ENCODE measurements at regions of chr20 and their contacts with region 1.

Region 1: DNA sequence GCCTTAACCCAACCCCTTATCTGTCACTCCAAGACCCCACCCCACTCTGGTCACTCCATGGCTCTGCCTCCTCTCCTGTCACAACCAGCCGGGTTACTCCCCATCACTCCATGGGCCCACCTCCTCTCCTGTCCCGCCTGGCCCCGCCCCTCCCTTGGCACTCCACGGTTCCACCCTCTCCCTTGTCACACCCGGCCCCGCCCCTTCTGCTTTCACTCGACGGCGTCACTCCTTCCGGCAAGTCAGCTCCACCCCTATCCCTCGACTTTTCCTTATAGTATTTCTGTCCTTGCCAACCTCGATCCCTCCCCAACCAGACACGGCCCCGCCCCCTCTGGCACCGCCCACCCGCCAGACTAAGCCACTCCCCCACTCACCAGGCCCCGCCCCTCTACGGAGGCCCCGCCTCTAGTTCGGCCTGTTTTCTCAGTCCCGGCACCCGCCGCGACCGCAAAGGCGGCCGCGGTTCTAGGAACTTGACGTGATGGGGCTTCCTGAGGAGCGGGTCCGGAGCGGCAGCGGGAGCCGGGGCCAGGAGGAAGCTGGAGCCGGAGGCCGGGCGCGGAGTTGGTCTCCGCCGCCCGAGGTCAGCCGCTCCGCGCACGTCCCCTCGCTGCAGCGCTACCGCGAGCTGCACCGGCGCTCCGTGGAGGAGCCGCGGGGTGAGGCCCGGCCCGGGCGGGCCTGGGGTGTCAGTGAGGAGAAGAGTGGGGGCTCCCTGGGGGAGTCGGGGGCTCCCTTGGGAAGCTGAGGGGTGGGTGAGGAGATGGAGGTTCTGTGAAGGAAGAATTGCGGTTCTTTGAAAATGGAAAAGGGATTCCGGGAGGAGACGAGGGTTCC is at the start of gene ACSS2:
- DNase-seq: peak; percentile 98
- ATAC-seq: peak; percentile 90
- H3K4me3 ChIP-seq: peak within 1 kb of the TSS; percentile 76 to 80
- H3K27ac ChIP-seq: peak within 1 kb of the TSS; percentile 57
- H3K4me1 ChIP-seq: peaks cover 23 to 50% of the 10 kb centered on the region in 2 experiments
- H3K27me3 ChIP-seq: no peaks in the 10 kb centered on the region
- CTCF ChIP-seq: no peak
- POLR2A ChIP-seq: peak; percentile 31
- RAD21 ChIP-seq: no peak
- total RNA-seq, gene ACSS2: 71.7 TPM

Region 2: DNA sequence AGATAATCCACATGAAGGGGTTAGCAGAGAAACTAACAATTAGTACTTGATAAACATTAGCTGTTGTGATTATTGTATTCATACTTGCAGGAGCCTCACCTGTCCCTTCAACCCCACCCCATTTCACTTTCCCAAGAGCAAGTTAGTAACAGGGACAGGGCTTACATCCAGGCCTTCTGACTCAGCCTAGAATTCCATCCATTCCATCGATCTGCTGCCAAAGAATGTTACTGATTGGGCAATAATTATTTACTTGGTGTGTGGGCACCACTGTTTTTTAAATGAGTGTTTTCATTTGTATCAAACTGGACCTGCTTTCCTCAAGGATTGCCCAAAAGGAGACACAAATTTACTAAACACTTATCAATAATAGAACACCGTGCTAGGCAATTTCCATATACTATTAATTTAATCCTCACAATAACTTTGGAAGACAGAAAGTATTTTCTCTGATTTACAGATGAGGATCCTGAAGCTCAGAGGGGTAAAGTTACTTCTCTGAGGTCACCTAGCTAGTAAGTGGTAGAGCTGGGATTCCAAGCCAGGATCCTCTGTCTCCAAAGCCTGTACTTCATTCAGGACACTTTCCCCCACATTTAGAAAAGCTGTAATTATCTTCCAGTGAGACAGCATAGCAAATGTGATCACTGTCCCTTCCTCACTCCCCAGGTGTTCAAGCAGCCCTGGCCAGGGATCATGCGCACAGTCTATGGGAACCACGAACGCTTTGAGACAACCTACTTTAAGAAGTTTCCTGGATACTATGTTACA is 46.5 kb after region 1 on chr20:
- CTCF ChIA-PET with region 1: no interaction called
- POLR2A ChIA-PET with region 1: no interaction called
- RAD21 ChIA-PET with region 1: no interaction called
- intact Hi-C with region 1: no loop called
- DNase-seq: no peak
- ATAC-seq: peak; percentile 47; the same call in 1 of the 2 replicates
- H3K4me3 ChIP-seq: no peak overlapping the region
- H3K27ac ChIP-seq: no peak overlapping the region
- H3K4me1 ChIP-seq: peaks cover 4 to 10% of the 10 kb centered on the region in 2 experiments
- H3K27me3 ChIP-seq: no peaks in the 10 kb centered on the region
- CTCF ChIP-seq: no peak
- POLR2A ChIP-seq: no peak
- RAD21 ChIP-seq: no peak

Region 3: DNA sequence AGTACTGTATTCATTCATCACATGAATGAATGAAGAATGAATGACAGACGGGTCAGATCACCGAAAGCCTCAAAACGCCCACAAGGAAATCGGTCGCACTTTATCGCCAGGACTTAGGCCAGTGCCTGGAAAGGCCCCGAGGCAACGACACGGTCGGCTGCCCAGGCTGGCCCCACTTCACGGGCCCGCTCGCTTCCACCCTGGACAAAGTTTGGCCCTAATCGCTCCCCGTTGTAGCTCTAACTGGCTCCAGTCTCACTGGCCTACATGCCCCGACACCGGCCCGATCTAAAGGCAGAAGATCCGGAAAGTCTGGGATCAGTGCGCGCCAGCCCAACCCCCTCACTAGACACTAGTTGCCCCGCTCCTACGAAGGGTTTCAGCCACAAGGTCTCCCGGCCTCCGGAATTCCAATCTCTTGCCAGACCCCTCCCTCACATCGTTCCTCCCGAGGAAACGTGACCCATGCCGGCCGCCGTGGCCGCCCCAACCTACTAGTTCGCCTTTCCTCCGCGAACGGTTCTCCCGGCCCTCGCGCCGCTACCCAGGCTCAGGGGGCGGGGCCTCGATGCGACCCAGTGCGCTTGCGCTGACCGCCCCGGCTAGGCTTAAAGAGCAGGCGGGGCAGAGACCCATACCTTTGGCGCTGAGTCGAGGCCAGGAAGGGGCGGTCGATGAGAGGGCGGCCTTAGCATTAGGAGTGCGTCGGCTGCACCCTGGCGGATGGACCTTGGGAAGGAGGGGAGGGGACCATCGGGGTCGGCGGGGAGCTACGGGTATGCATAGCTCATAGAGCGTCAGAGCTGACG is 79.1 kb after region 1 on chr20 and contains the starts of genes GSS and MYH7B:
- CTCF ChIA-PET with region 1: interaction called, 26 read pairs
- POLR2A ChIA-PET with region 1: interaction called, 7 read pairs
- RAD21 ChIA-PET with region 1: interaction called, 5 to 11 read pairs
- intact Hi-C with region 1: loop called (anchors 1 kb)
- DNase-seq: peak; percentile 91
- ATAC-seq: peak; percentile 94
- H3K4me3 ChIP-seq: peak within 1 kb of the TSS; percentile 88 to 91
- H3K27ac ChIP-seq: peak within 1 kb of the TSS; percentile 75
- H3K4me1 ChIP-seq: peaks cover 7 to 19% of the 10 kb centered on the region in 2 experiments
- H3K27me3 ChIP-seq: no peaks in the 10 kb centered on the region
- CTCF ChIP-seq: peak; percentile 37 to 78 (median 49); a peak in 5 of 6 replicates
- POLR2A ChIP-seq: peak; percentile 88
- RAD21 ChIP-seq: peak; percentile 89
- total RNA-seq, gene GSS: 83.6 TPM
- total RNA-seq, gene MYH7B: 0.74 TPM

Region 4: DNA sequence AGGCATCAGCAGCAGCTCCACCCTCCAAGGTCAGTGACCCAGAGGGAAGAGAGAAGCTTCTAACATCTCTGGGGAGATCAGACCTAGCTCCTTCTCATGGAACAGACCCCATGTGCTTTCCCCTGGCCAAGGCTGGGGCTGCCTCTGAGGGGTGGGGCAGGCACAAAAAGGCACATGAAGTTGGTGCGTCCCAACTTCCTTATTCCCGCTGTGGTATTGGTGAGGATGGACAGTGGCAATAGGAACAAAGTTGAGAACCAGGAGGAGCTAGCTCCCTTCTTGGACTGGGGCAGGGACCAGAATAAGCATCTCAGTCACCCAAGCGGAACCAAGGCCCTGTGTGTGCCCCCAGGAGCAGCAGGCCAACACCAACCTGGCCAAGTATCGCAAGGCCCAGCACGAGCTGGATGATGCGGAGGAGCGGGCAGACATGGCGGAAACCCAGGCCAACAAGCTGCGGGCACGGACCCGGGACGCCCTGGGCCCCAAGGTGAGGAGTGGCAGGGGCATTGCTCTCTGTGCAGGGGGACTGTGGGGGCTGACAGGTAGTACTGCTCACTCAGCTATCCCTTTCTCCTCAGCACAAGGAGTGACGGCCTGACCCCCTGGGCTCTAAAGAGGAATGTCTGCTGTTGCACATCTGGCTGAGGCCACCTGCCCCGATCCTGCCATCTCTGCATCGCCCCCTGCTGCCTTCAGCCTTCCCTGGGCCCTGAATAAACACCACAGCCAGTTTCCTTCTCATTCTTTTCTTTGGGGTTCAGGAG is 125.4 kb after region 1 on chr20:
- CTCF ChIA-PET with region 1: interaction called, 19 read pairs
- POLR2A ChIA-PET with region 1: interaction called, 3 read pairs
- RAD21 ChIA-PET with region 1: interaction called, 5 to 8 read pairs
- intact Hi-C with region 1: no loop called
- DNase-seq: no peak
- ATAC-seq: peak; percentile 58
- H3K4me3 ChIP-seq: no peak overlapping the region
- H3K27ac ChIP-seq: no peak overlapping the region
- H3K4me1 ChIP-seq: no peaks in the 10 kb centered on the region
- H3K27me3 ChIP-seq: no peaks in the 10 kb centered on the region
- CTCF ChIP-seq: peak in 2 of 3 experiments; percentile 45 to 48; a peak in 4 of 6 replicates
- POLR2A ChIP-seq: no peak
- RAD21 ChIP-seq: peak; percentile 39; the same call in 1 of the 2 replicates

Region 5: GRCh38 chr20:35085477-35086225 is 209.3 kb after region 1 on chr20:
- CTCF ChIA-PET with region 1: interaction called, 5 read pairs
- POLR2A ChIA-PET with region 1: no interaction called
- RAD21 ChIA-PET with region 1: interaction called in 1 of 2 experiments, 4 read pairs
- intact Hi-C with region 1: loop called (anchors 5 kb)
- DNase-seq: no peak
- ATAC-seq: no peak
- H3K4me3 ChIP-seq: no peak overlapping the region
- H3K27ac ChIP-seq: no peak overlapping the region
- H3K4me1 ChIP-seq: no peaks in the 10 kb centered on the region; a peak in 1 of 4 replicates
- H3K27me3 ChIP-seq: no peaks in the 10 kb centered on the region
- CTCF ChIP-seq: no peak
- POLR2A ChIP-seq: no peak
- RAD21 ChIP-seq: no peak

Region 6: DNA sequence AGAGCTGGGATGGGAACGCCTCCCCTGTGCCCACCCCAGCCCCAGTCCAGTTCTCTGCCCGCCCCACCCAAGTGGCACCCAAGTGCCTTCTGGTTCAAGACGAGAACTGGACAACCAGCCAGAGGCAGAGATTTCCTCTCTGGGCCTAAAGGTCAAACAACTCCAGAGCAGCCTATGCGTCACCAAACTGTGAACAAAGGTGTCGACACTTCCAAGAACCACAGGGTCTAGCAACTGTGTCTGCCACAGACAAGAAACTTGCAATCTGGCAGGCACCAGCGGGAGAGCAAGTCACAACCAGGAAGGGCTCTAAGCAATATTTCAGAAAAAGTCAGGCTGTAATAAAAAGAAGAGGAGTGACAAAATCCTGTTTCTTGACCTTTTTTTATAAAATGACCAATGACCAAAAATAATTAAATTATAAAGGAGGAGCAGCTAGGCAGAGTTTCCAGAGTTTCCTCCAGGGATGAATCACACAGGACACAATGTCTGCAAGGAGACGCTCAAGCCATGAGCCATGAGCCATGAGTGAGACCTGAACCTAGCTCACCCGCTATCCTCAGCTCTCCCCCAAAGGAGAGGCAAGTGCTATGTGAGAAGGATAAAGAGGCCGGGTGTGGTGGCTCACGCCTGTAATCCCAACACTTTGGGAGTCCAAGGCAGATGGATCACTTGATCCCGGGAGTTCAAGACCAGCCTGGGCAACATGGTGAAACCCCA is 259.6 kb after region 1 on chr20:
- CTCF ChIA-PET with region 1: no interaction called
- POLR2A ChIA-PET with region 1: no interaction called
- RAD21 ChIA-PET with region 1: no interaction called
- intact Hi-C with region 1: no loop called
- DNase-seq: no peak
- ATAC-seq: no peak
- H3K4me3 ChIP-seq: no peak overlapping the region
- H3K27ac ChIP-seq: no peak overlapping the region
- H3K4me1 ChIP-seq: no peaks in the 10 kb centered on the region
- H3K27me3 ChIP-seq: no peaks in the 10 kb centered on the region
- CTCF ChIP-seq: no peak
- POLR2A ChIP-seq: no peak
- RAD21 ChIP-seq: no peak

Region 7: DNA sequence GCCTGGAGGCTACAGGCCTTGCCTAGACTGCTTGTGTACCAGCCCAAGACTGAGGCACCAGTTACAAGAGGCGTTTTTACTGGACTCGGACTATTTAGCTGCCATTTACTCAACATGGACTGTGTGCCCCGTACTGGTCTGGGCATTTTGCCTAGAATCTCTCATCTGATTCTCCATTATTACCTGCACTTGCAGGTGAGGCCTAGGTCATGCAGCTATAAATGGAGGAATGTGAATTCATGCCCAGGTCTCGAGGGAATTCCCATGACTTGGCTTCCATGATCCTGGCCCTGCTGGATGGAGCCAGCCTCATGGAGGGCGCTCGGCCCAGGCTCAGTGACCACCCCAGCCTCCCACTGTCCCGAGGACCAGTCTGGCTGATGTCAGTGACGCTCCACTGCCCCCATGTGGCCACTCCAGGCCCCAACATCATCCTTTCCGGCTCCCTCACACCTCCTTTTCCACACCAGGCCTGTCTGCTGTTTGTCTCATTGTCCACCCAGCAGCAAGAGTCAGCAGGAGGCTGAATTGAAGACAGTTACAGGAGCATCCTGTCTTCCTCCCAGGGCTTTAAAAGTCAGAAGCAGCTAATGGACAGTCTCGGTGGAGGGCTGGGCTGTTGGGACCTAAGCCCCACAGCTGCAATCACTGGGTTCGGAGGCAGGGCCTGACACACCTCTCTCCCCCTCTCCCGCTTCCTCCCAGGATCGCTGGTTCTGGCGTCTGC is 392.8 kb after region 1 on chr20:
- CTCF ChIA-PET with region 1: no interaction called
- POLR2A ChIA-PET with region 1: interaction called, 3 read pairs
- RAD21 ChIA-PET with region 1: no interaction called
- intact Hi-C with region 1: loop called (anchors 10 kb)
- DNase-seq: no peak
- ATAC-seq: peak; percentile 89
- H3K4me3 ChIP-seq: no peak overlapping the region
- H3K27ac ChIP-seq: no peak overlapping the region
- H3K4me1 ChIP-seq: peaks cover 9 to 17% of the 10 kb centered on the region in 2 experiments
- H3K27me3 ChIP-seq: no peaks in the 10 kb centered on the region
- CTCF ChIP-seq: peak; percentile 60 to 89 (median 88); a peak in 5 of 6 replicates
- POLR2A ChIP-seq: no peak
- RAD21 ChIP-seq: peak; percentile 84

Measured in HCT116 (cell line).